Esophagus muscularis mucosa (tissue), 4 donors: ENCODE measurements at regions of chr4 and their contacts with region 1.

Region 1: DNA sequence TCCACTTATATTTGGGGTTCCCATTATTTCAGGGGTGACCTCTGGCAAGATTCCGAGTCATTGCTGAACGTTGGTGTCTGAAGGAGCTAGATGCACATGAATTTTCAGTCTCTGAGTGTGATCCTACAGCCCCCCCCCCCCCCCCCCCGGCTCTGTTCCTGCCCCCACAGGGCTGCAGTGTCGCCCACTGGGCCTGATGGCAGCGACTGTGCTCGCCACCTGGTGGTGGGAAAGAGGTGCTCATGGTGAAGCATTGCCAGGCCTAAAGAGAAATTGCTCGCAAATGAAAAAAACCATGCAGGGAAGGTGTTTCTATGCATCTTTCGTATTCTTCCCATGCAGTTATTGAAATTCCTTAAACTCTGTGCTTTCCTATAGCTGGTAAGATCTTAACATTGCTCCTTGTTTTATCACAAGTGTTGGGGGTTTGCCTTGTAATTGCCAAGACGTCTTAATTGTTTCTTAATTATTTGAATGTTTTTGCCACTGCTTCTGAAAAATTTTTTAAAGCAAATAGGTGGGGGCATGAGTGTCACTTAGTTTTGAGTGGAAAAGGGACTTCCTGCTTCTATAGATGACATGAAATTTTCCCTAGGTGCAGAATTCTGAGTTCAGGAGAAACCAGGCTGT is 63.2 kb downstream of the CLDN22 start:
- DNase-seq: no peak
- H3K4me3 ChIP-seq: no peak overlapping the region
- H3K27ac ChIP-seq: peak overlapping the region in 3 of 4 donors; percentile 4 to 34 (median 15)
- H3K4me1 ChIP-seq: peaks cover 6 to 23% (median 16%) of the 10 kb centered on the region in 4 donors
- H3K27me3 ChIP-seq: no peaks in the 10 kb centered on the region
- CTCF ChIP-seq: peak; percentile 51 to 69 (median 67)
- EP300 ChIP-seq: no peak
- POLR2A ChIP-seq: no peak

Region 2: DNA sequence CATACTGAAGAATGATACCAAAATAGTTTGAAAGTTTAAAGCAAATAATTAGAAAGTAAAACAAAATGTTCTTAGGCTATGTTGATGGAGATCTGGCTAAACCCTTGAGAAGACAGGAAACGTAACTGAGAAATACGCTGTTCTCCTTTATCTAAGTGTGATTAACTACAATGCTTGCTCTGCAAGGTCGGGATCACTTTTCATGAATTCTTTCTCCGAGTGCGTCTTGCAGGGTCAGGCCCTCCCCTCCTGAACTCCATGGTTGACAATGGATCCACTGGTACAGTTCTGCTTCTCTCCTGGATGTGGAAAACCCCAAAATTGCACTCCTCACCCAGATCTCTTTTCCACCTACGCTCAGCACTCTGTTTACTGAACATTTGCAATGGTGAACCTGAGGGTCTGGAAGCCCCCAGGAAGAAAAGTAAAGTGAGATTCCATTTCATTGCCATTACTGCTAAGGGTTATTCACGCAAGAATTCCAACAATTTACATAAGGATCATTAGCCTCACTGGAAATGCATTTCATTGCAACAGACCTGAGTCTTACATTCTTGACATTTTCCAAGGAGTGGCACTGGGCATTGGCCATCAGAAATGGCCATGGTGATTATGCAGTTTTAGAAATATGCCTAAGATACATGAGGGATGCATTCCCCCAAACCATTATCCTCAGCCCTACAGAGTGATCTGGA is 182.4 kb before region 1 on chr4:
- intact Hi-C with region 1: loop called (anchors 2 kb)
- DNase-seq: no peak
- H3K4me3 ChIP-seq: no peak overlapping the region
- H3K27ac ChIP-seq: no peak overlapping the region
- H3K4me1 ChIP-seq: peaks cover 0 to 3% (median 0%) of the 10 kb centered on the region in 4 donors
- H3K27me3 ChIP-seq: no peaks in the 10 kb centered on the region
- CTCF ChIP-seq: no peak
- EP300 ChIP-seq: no peak
- POLR2A ChIP-seq: no peak

Region 3: GRCh38 chr4:183471946-183472708 is 215.3 kb after region 1 on chr4:
- intact Hi-C with region 1: no loop called
- DNase-seq: peak; percentile 97
- H3K4me3 ChIP-seq: peak overlapping the region in 3 of 4 donors; percentile 1 to 25 (median 19)
- H3K27ac ChIP-seq: no peak overlapping the region
- H3K4me1 ChIP-seq: peaks cover 0 to 7% (median 2%) of the 10 kb centered on the region in 4 donors
- H3K27me3 ChIP-seq: peaks cover 0 to 4% (median 0%) of the 10 kb centered on the region in 4 donors
- CTCF ChIP-seq: peak; percentile 77 to 89 (median 89)
- EP300 ChIP-seq: no peak
- POLR2A ChIP-seq: no peak